ENCODE measurements at regions of chr12 and their contacts with region 1.

Region 1: DNA sequence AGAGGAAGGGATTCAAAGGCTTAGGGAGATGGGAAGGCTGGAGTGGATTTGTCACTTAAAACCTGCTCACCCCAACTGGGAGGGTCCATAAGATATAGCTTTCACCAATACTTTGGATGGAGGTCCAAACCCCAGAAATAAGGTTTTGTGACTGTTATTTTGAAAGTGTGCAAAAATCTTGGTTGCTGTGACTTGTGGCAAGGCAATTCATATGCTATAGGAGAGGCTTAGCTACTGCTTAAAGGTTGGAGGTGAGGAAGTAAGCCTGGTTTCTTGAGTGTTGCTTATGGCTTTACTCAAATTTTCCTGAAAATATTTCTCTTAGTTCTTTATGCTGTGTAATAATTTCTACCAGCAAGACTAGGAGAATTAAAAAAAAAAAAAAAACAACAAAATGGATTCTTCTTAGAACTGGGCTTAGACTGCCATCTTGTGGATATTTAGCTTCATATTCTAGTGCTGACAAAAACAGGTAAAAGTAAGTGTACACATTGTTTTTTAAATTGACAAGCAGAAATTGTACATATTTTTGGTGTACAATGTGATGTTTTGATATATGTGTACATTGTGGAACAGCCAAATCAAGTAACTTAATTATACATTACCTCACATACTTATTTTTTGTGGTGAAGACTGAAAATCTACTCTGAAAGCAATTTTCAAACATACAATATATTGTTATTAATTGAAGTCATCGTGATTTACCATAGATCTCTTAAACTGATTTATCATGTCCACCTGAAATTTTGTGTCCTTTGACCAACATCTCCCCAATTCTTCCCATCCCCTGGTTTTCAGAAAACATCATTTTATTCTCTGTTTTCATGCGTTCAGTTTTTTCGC is 23.0 kb downstream of the PDE6H start:
- DNase-seq: peak; percentile 6 to 49 (median 12)
- ATAC-seq: no peak
- H3K4me3 ChIP-seq: no peak overlapping the region
- H3K27ac ChIP-seq: no peak overlapping the region
- H3K4me1 ChIP-seq: no peaks in the 10 kb centered on the region
- H3K27me3 ChIP-seq: no peaks in the 10 kb centered on the region
- CTCF ChIP-seq: peak in 2 of 3 experiments; percentile 37 to 69; a peak in 3 of 6 replicates
- EP300 ChIP-seq: no peak
- POLR2A ChIP-seq: no peak
- RAD21 ChIP-seq: peak; percentile 63 to 75

Region 2: GRCh38 chr12:14723763-14724162 is 272.0 kb before region 1 on chr12:
- CTCF ChIA-PET with region 1: interaction called, 4 read pairs
- POLR2A ChIA-PET with region 1: no interaction called
- in situ Hi-C with region 1: no loop called
- intact Hi-C with region 1: loop called (anchors 10 kb)
- DNase-seq: peak; percentile 5 to 33 (median 9)
- ATAC-seq: peak; percentile 67; the same call in 2 of the 3 replicates
- H3K4me3 ChIP-seq: no peak overlapping the region
- H3K27ac ChIP-seq: no peak overlapping the region
- H3K4me1 ChIP-seq: no peaks in the 10 kb centered on the region
- H3K27me3 ChIP-seq: no peaks in the 10 kb centered on the region
- CTCF ChIP-seq: peak; percentile 41 to 53 (median 52)
- EP300 ChIP-seq: no peak
- POLR2A ChIP-seq: no peak
- RAD21 ChIP-seq: peak; percentile 24 to 57; a peak in 2 of 4 replicates

Region 3: GRCh38 chr12:14810953-14811483 is 184.8 kb before region 1 on chr12:
- CTCF ChIA-PET with region 1: interaction called, 12 read pairs
- POLR2A ChIA-PET with region 1: interaction called, 3 read pairs
- in situ Hi-C with region 1: no loop called
- intact Hi-C with region 1: loop called (anchors 10 kb)
- DNase-seq: peak in 2 of 4 experiments; percentile 10 to 37
- ATAC-seq: peak; percentile 72
- H3K4me3 ChIP-seq: no peak overlapping the region
- H3K27ac ChIP-seq: no peak overlapping the region
- H3K4me1 ChIP-seq: no peaks in the 10 kb centered on the region
- H3K27me3 ChIP-seq: no peaks in the 10 kb centered on the region
- CTCF ChIP-seq: peak; percentile 40 to 56 (median 50)
- EP300 ChIP-seq: no peak
- POLR2A ChIP-seq: no peak
- RAD21 ChIP-seq: peak; percentile 71 to 75

Region 4: GRCh38 chr12:14845350-14845750 is 150.5 kb before region 1 on chr12:
- CTCF ChIA-PET with region 1: interaction called, 15 read pairs
- POLR2A ChIA-PET with region 1: no interaction called
- in situ Hi-C with region 1: loop called (anchors 10 kb)
- intact Hi-C with region 1: loop called (anchors 1 kb)
- DNase-seq: peak; percentile 21 to 58 (median 29)
- ATAC-seq: peak; percentile 74
- H3K4me3 ChIP-seq: no peak overlapping the region
- H3K27ac ChIP-seq: no peak overlapping the region
- H3K4me1 ChIP-seq: peaks cover 0 to 10% of the 10 kb centered on the region in 2 experiments; a peak in 2 of 5 replicates
- H3K27me3 ChIP-seq: no peaks in the 10 kb centered on the region
- CTCF ChIP-seq: peak; percentile 38 to 63 (median 44); a peak in 5 of 6 replicates
- EP300 ChIP-seq: no peak
- POLR2A ChIP-seq: no peak
- RAD21 ChIP-seq: peak; percentile 79

Region 5: GRCh38 chr12:14937689-14938088 is 58.1 kb before region 1 on chr12:
- CTCF ChIA-PET with region 1: interaction called, 4 read pairs
- POLR2A ChIA-PET with region 1: no interaction called
- in situ Hi-C with region 1: no loop called
- intact Hi-C with region 1: loop called (anchors 5 kb)
- DNase-seq: no peak
- ATAC-seq: no peak
- H3K4me3 ChIP-seq: no peak overlapping the region
- H3K27ac ChIP-seq: no peak overlapping the region
- H3K4me1 ChIP-seq: no peaks in the 10 kb centered on the region; a peak in 1 of 5 replicates
- H3K27me3 ChIP-seq: no peaks in the 10 kb centered on the region
- CTCF ChIP-seq: peak in 2 of 3 experiments; percentile 13 to 29; a peak in 1 of 6 replicates
- EP300 ChIP-seq: no peak
- POLR2A ChIP-seq: no peak
- RAD21 ChIP-seq: peak in 1 of 2 experiments; percentile 34; a peak in 1 of 4 replicates

Region 6: DNA sequence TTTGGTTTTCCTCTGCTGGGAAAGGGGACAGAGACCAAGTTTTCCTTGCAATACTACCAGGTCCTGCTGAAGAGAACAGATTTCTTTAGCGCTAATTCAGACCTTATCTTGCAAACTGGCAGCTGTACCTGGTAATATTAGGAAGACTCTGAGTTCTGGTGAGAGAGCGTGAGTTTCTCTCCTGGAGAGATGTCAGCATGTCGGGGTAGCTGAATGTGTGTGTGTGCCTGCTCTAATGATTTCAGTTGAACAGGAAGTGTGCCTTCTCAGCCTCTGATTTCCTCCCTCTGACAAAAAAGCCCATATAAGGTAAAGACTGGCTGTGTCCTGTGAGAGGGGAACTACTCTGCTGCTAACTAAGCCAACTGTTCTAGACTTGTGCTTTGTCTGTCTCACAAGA is 47.1 kb before region 1 on chr12:
- CTCF ChIA-PET with region 1: no interaction called
- POLR2A ChIA-PET with region 1: no interaction called
- in situ Hi-C with region 1: no loop called
- intact Hi-C with region 1: no loop called
- DNase-seq: peak in 1 of 4 experiments; percentile 16
- ATAC-seq: peak; percentile 58
- H3K4me3 ChIP-seq: no peak overlapping the region
- H3K27ac ChIP-seq: peak overlapping the region; percentile 53; the same call in 1 of the 3 replicates
- H3K4me1 ChIP-seq: no peaks in the 10 kb centered on the region; a peak in 1 of 5 replicates
- H3K27me3 ChIP-seq: no peaks in the 10 kb centered on the region
- CTCF ChIP-seq: no peak
- EP300 ChIP-seq: peak; percentile 12; the same call in 1 of the 2 replicates
- POLR2A ChIP-seq: no peak
- RAD21 ChIP-seq: no peak

Measured in K562 (cell line).